ENCODE measurements at regions of chr21 and their contacts with region 1.

Region 1: GRCh38 chr21:40120940-40121575 is 253.8 kb downstream of the PCP4 start:
- DNase-seq: no peak
- ATAC-seq: no peak
- H3K4me3 ChIP-seq: no peak overlapping the region
- H3K27ac ChIP-seq: no peak overlapping the region
- H3K4me1 ChIP-seq: no peaks in the 10 kb centered on the region
- H3K27me3 ChIP-seq: no peaks in the 10 kb centered on the region
- CTCF ChIP-seq: peak; percentile 56

Region 2: DNA sequence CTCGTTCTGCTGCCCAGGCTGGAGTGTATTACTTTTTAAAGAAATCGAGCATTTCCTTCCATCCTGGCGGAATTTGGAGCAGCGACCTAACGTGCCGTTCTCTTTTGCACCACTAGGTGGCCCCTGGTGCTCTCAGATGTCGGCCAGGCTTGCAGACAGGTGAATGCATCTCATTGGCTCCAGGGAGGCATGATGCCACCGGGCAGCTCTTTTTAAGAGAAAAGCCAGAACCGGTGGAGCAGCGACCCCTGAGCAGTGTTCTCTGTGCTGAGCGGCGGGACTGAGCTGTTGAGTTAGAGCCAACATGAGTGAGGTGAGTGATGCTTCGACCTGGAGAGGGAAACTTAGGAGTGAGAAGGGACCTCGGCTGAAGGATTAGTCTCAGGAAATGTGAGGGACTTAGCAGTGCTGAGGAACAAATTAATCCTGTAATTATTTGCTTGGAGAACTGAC is 253.8 kb before region 1 on chr21 and contains the start of gene PCP4:
- intact Hi-C with region 1: loop called (anchors 5 to 10 kb)
- DNase-seq: peak in 1 of 2 donors; percentile 31
- ATAC-seq: peak in 1 of 4 donors; percentile 44
- H3K4me3 ChIP-seq: no peak within 1 kb of the TSS
- H3K27ac ChIP-seq: no peak within 1 kb of the TSS
- H3K4me1 ChIP-seq: no peaks in the 10 kb centered on the region
- H3K27me3 ChIP-seq: no peaks in the 10 kb centered on the region
- CTCF ChIP-seq: peak; percentile 58
- total RNA-seq, gene PCP4: not detected

Region 3: DNA sequence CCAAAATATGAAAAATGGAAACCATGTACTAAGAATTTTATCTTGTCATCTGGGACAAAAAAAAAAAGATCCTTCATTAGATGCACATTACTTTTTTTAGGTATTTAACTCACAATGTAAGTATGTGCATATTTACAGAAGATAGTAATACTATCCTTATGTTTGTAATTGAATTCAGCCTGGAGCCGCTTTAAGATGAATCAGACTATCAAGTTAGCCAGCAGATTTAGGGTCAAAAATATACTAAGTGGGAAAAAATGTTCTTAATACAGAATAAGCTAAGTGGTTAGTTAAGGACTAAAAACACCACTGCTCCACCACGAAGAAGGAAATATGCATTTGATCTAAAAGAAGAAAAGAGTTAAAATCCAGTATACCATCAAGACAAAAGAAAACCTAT is 676.8 kb after region 1 on chr21:
- intact Hi-C with region 1: no loop called
- DNase-seq: no peak
- ATAC-seq: no peak
- H3K4me3 ChIP-seq: no peak overlapping the region
- H3K27ac ChIP-seq: no peak overlapping the region
- H3K4me1 ChIP-seq: no peaks in the 10 kb centered on the region
- H3K27me3 ChIP-seq: no peaks in the 10 kb centered on the region
- CTCF ChIP-seq: no peak